PC-9 (cell line): ENCODE measurements at regions of chr2 and their contacts with region 1.

Region 1: GRCh38 chr2:219206442-219207253 is at the start of gene ZFAND2B:
- DNase-seq: peak; percentile 76 to 96
- H3K4me3 ChIP-seq: peak within 1 kb of the TSS; percentile 78
- H3K27ac ChIP-seq: peak within 1 kb of the TSS; percentile 40
- H3K4me1 ChIP-seq: peaks cover 18% of the 10 kb centered on the region
- H3K27me3 ChIP-seq: no peaks in the 10 kb centered on the region
- CTCF ChIP-seq: no peak
- total RNA-seq, gene ZFAND2B: 24.6 and 39.4 TPM in 2 replicates

Region 2: DNA sequence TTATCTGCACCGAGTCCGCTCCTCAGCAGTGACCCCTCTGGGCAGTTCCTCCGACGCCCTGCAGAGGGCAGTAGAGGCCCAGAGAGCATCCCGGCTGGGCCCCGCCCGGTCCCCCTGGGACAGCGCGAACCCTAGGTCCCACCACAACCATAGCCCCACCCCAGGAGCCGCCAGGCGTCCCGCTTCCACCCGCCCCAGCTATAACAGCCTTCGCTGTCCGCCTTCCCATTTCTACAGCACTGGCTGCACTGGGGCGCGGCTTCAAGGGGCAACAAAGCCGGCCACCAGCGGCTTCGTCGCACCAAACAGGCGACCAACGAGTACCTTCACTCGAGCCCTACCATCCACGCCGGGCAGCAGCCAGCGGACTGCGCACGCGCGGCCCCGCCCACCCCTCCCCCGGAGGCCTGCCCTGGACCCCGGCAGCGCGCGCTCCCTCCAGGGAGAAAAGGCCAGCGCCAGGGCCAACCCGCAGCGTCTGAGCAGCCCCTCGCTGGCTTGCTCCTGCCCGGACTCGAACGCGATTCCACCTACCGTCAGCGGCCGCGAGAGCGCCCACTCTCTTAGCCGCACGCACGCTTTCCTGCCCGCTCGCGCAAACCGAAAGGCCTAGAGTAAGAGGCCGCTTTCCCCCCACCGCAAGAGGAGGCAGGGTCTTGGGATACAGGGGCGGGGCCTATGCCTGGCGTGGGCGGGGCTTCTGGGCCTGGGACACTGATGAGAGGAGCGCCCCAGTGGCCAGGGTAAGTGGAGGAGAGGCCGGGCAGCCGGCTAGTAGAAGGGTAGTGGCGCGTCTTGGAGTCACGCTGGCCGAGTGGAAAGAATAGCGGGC is 46.2 kb before region 1 on chr2 and contains the start of gene NHEJ1:
- CTCF ChIA-PET with region 1: no interaction called
- POLR2A ChIA-PET with region 1: interaction called, 7 read pairs
- intact Hi-C with region 1: loop called (anchors 1 kb)
- DNase-seq: peak; percentile 79 to 95
- H3K4me3 ChIP-seq: peak within 1 kb of the TSS; percentile 72
- H3K27ac ChIP-seq: peak within 1 kb of the TSS; percentile 57
- H3K4me1 ChIP-seq: 0 out of 2 replicates have a peak, but pooled peaks cover 8% of the 10 kb centered on the region
- H3K27me3 ChIP-seq: no peaks in the 10 kb centered on the region
- CTCF ChIP-seq: peak; percentile 96
- total RNA-seq, gene NHEJ1: 9.8 and 11.2 TPM in 2 replicates

Region 3: DNA sequence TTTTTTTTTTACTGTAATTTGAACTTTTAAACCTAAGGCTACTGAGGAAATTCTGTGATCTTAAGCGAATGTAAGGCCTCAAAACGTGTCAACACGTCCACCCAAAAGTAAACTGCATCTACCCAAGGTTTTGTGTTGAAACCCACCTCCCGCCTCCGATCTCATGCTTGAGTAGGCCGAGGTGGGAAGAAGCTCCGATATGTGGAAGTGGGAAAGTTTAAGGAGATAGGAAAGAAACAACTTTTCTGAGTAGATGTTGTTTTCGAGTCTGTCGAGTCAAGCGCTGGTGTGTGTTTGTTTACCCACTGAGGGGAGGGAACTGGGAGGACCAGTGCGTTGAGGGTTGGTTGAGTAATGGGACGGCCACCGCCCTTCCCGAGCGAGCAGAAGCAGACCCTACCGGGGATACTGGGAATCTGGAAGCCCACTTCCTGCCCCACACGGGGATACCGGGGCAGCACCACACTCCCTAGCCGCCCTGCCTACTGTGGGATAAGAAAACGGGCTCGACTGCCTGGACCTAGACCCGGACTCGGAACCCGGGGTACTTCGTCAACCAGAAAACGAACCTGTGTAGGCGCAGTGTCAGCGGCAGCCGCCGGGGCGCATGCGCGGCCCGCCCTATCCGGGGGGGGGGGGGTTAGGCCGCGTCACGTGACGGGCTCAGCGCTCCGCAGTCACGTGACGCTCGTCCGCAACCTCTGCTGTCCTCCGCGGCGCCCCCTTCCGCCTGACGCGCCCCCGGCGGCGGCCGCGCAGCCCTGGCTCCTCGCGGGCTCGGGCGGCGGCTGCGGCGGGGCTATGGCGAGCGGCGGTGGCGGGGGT is 28.9 kb before region 1 on chr2 and contains the start of gene RETREG2:
- CTCF ChIA-PET with region 1: interaction called, 3 read pairs
- POLR2A ChIA-PET with region 1: interaction called, 8 read pairs
- intact Hi-C with region 1: loop called (anchors 2 kb)
- DNase-seq: peak; percentile 81 to 86
- H3K4me3 ChIP-seq: peak within 1 kb of the TSS; percentile 95
- H3K27ac ChIP-seq: peak within 1 kb of the TSS; percentile 77
- H3K4me1 ChIP-seq: peaks cover 19% of the 10 kb centered on the region
- H3K27me3 ChIP-seq: no peaks in the 10 kb centered on the region
- CTCF ChIP-seq: no peak
- total RNA-seq, gene RETREG2: 77.0 and 84.4 TPM in 2 replicates

Region 4: GRCh38 chr2:219278655-219279516 is 72.2 kb after region 1 on chr2 and contains the start of gene DNAJB2:
- CTCF ChIA-PET with region 1: no interaction called
- POLR2A ChIA-PET with region 1: interaction called, 4 read pairs
- intact Hi-C with region 1: loop called (anchors 2 kb)
- DNase-seq: peak; percentile 90 to 98
- H3K4me3 ChIP-seq: peak within 1 kb of the TSS; percentile 81
- H3K27ac ChIP-seq: peak within 1 kb of the TSS; percentile 51
- H3K4me1 ChIP-seq: peaks cover 42% of the 10 kb centered on the region
- H3K27me3 ChIP-seq: no peaks in the 10 kb centered on the region
- CTCF ChIP-seq: no peak
- total RNA-seq, gene DNAJB2: 38.5 and 47.5 TPM in 2 replicates